ENCODE measurements at regions of chr22 and their contacts with region 1.

Region 1: DNA sequence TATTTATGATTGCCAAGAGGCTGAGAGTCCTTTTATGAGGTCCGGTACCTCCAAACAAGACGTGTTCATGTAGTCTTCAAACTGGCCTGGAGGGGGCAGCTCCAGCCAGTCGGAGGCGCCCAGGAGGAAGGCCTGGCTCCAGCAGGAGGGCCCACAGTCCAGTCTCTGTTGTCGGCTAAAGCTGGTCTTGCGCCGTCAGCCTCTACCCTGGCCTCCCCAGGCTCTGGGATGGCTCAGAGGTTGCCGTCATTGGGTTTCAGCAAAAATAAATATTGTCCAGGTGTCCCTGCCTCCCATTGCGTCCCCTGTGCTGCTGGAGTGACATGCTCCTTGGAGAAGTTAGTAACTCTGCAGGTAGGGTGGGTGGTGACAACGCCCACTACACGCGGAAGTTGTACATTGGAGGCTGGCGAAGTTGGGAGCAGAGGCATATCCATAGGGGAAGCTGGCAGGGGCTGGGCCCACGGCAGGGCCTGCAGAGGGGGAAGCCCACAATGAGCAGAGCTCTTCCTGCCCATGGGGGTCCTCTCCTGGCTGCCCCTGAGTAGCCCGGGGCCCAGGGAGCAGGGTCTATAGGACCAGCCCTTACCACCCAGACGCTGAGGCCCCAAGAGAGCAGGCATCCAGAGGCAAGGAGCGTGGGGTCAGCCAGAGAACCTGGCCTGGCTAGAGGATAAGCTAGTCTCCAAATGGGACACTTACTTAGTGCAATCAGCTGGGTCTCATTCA is 1.1 kb upstream of the SLC25A1 start:
- DNase-seq: peak; percentile 85
- H3K4me3 ChIP-seq: peak overlapping the region; percentile 69
- H3K27ac ChIP-seq: peak overlapping the region; percentile 74
- H3K4me1 ChIP-seq: peaks cover 15% of the 10 kb centered on the region
- H3K27me3 ChIP-seq: no peaks in the 10 kb centered on the region
- CTCF ChIP-seq: peak; percentile 69

Region 2: GRCh38 chr22:19291580-19292457 is 112.2 kb after region 1 on chr22 and contains the start of gene CLTCL1:
- intact Hi-C with region 1: loop called (anchors 10 kb)
- DNase-seq: peak; percentile 79
- H3K4me3 ChIP-seq: peak within 1 kb of the TSS; percentile 96
- H3K27ac ChIP-seq: peak within 1 kb of the TSS; percentile 16
- H3K4me1 ChIP-seq: no peaks in the 10 kb centered on the region
- H3K27me3 ChIP-seq: no peaks in the 10 kb centered on the region
- CTCF ChIP-seq: no peak
- total RNA-seq, gene CLTCL1: 3.4 to 3.5 TPM

Region 3: DNA sequence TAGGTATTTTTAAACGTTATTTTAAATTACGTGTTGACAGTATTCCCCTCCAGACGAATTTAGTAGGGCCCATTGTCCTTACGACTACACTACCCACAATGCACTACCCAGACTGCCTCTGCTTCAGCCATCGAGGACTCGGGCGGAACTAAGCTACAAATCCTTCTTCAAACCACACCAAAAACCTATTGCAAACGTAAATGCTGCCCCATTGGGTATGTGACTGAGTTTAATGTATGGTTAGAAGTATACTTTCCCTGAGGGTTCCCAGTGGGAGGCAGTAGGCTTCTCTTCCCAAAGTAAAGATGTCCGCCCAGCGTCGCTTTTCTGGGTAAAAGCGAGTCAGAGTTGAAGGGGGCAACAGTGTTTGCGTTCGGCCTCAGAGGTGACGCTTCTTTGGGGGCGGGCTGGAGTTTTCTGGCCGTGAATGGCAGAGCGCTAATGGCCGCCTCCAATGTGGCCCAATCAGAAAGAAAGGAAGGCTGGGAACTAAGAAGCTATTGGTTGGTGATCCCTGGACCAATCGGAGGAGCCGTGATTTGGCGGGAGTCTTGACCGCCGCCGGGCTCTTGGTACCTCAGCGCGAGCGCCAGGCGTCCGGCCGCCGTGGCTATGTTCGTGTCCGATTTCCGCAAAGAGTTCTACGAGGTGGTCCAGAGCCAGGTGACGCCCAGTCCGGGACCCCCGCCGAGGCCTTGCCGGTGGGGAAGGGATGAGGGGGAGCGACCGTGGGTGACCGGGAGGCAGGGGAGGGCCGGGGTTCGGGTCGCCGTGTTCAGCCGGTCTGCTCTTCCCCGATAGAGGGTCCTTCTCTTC is 299.9 kb after region 1 on chr22 and contains the start of gene CDC45:
- intact Hi-C with region 1: loop called (anchors 10 kb)
- DNase-seq: peak; percentile 96
- H3K4me3 ChIP-seq: peak within 1 kb of the TSS; percentile 81
- H3K27ac ChIP-seq: peak within 1 kb of the TSS; percentile 91
- H3K4me1 ChIP-seq: peaks cover 11% of the 10 kb centered on the region
- H3K27me3 ChIP-seq: no peaks in the 10 kb centered on the region
- CTCF ChIP-seq: no peak
- total RNA-seq, gene CDC45: 5.1 to 35.9 TPM